CD8-positive, alpha-beta T cell (primary cell): ENCODE measurements at regions of chr13 and their contacts with region 1.

Region 1: GRCh38 chr13:95403828-95404522 is 102.7 kb upstream of the ABCC4 start:
- DNase-seq: peak; percentile 52 to 86 (median 76)
- ATAC-seq: peak; percentile 94
- H3K4me3 ChIP-seq: peak overlapping the region; percentile 58 to 69
- H3K4me3 Mint-ChIP-seq: peak overlapping the region; percentile 91
- H3K27ac ChIP-seq: no peak overlapping the region
- H3K27ac Mint-ChIP-seq: no peak overlapping the region
- H3K4me1 ChIP-seq: peaks cover 8% of the 10 kb centered on the region
- H3K4me1 Mint-ChIP-seq: peaks cover 8% of the 10 kb centered on the region
- H3K27me3 ChIP-seq: no peaks in the 10 kb centered on the region
- H3K27me3 Mint-ChIP-seq: peaks cover 3% of the 10 kb centered on the region
- CTCF ChIP-seq: peak; percentile 93

Region 2: DNA sequence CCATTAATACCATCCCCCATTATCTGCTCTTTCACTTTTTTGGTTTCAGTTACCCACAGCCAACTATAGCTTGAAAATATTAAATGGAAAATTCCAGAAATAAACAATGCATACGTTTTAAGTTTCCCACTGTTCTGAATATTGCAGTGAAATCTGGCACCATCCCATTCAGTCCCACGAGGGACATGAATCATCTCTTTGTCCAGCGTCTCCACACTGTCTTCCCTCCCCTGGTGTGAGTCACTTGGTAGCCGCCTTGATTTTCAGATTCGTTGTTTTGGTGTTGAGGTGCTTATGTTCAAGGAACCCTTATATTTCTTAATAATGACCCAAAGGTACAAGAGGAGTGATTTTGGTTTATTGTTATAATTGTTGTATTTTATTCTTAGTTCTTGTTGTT is 1170.6 kb before region 1 on chr13:
- CTCF ChIA-PET with region 1: no interaction called
- POLR2A ChIA-PET with region 1: no interaction called
- intact Hi-C with region 1: no loop called
- DNase-seq: no peak
- ATAC-seq: no peak
- H3K4me3 ChIP-seq: no peak overlapping the region
- H3K4me3 Mint-ChIP-seq: no peak overlapping the region
- H3K27ac ChIP-seq: no peak overlapping the region
- H3K27ac Mint-ChIP-seq: no peak overlapping the region
- H3K4me1 ChIP-seq: peaks cover 18% of the 10 kb centered on the region
- H3K4me1 Mint-ChIP-seq: peaks cover 24% of the 10 kb centered on the region
- H3K27me3 ChIP-seq: no peaks in the 10 kb centered on the region
- H3K27me3 Mint-ChIP-seq: no peaks in the 10 kb centered on the region
- CTCF ChIP-seq: no peak

Region 3: DNA sequence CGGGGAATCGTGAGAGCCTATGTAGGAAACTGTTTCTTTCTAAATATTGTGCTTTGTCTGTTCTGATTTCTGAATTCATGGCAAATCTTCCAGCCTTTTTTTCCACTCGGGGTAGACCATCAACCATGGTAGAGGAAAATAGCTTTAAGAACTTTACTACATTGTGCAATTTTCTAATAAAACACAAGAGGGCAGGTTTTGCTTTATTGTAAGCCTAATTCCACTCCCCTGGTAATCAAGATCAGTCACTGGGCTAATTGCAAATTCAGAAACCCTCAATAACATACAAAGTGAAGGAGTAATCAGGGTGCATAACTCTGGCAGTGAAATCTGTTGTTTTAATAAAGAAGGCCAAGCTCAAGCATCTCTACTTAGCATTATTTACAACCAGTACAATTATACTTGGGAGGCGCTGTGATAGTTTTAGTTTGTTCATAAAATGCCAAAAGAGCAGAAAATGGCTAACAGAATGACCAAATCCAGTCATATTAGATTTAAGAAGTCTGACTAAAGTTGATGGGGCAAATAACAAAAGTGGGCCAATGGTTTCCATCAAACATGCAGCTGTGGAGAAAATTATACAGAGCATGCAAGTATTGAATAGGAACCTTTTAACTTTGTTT is 968.3 kb before region 1 on chr13:
- CTCF ChIA-PET with region 1: interaction called, 4 read pairs
- POLR2A ChIA-PET with region 1: no interaction called
- intact Hi-C with region 1: loop called in 1 of 2 experiments (anchors 5 kb)
- DNase-seq: peak in 2 of 9 experiments; percentile 54 to 64
- ATAC-seq: peak; percentile 81
- H3K4me3 ChIP-seq: no peak overlapping the region
- H3K4me3 Mint-ChIP-seq: no peak overlapping the region
- H3K27ac ChIP-seq: no peak overlapping the region
- H3K27ac Mint-ChIP-seq: no peak overlapping the region
- H3K4me1 ChIP-seq: no peaks in the 10 kb centered on the region
- H3K4me1 Mint-ChIP-seq: peaks cover 4% of the 10 kb centered on the region
- H3K27me3 ChIP-seq: no peaks in the 10 kb centered on the region
- H3K27me3 Mint-ChIP-seq: no peaks in the 10 kb centered on the region
- CTCF ChIP-seq: peak; percentile 82

Region 4: GRCh38 chr13:94674609-94675348 is 729.2 kb before region 1 on chr13:
- CTCF ChIA-PET with region 1: interaction called, 15 read pairs
- POLR2A ChIA-PET with region 1: no interaction called
- intact Hi-C with region 1: loop called in 1 of 2 experiments (anchors 1 kb)
- DNase-seq: peak in 8 of 9 experiments; percentile 17 to 60 (median 50)
- ATAC-seq: peak; percentile 52
- H3K4me3 ChIP-seq: no peak overlapping the region
- H3K4me3 Mint-ChIP-seq: no peak overlapping the region
- H3K27ac ChIP-seq: no peak overlapping the region
- H3K27ac Mint-ChIP-seq: no peak overlapping the region
- H3K4me1 ChIP-seq: no peaks in the 10 kb centered on the region
- H3K4me1 Mint-ChIP-seq: no peaks in the 10 kb centered on the region
- H3K27me3 ChIP-seq: no peaks in the 10 kb centered on the region
- H3K27me3 Mint-ChIP-seq: peaks cover 22% of the 10 kb centered on the region
- CTCF ChIP-seq: peak; percentile 87

Region 5: GRCh38 chr13:94860981-94861407 is 543.0 kb before region 1 on chr13:
- CTCF ChIA-PET with region 1: no interaction called
- POLR2A ChIA-PET with region 1: no interaction called
- intact Hi-C with region 1: no loop called
- DNase-seq: peak in 1 of 9 experiments; percentile 40
- ATAC-seq: no peak
- H3K4me3 ChIP-seq: peak overlapping the region; percentile 37 to 42
- H3K4me3 Mint-ChIP-seq: peak overlapping the region; percentile 86
- H3K27ac ChIP-seq: no peak overlapping the region
- H3K27ac Mint-ChIP-seq: peak overlapping the region; percentile 14
- H3K4me1 ChIP-seq: peaks cover 4% of the 10 kb centered on the region
- H3K4me1 Mint-ChIP-seq: peaks cover 12% of the 10 kb centered on the region
- H3K27me3 ChIP-seq: no peaks in the 10 kb centered on the region
- H3K27me3 Mint-ChIP-seq: peaks cover 5% of the 10 kb centered on the region
- CTCF ChIP-seq: no peak

Region 6: GRCh38 chr13:95191821-95192563 is 212.0 kb before region 1 on chr13:
- CTCF ChIA-PET with region 1: interaction called, 205 read pairs
- POLR2A ChIA-PET with region 1: interaction called, 13 read pairs
- intact Hi-C with region 1: loop called (anchors 1 kb)
- DNase-seq: peak; percentile 29 to 74 (median 57)
- ATAC-seq: peak; percentile 65
- H3K4me3 ChIP-seq: no peak overlapping the region
- H3K4me3 Mint-ChIP-seq: no peak overlapping the region
- H3K27ac ChIP-seq: no peak overlapping the region
- H3K27ac Mint-ChIP-seq: no peak overlapping the region
- H3K4me1 ChIP-seq: no peaks in the 10 kb centered on the region
- H3K4me1 Mint-ChIP-seq: peaks cover 8% of the 10 kb centered on the region
- H3K27me3 ChIP-seq: no peaks in the 10 kb centered on the region
- H3K27me3 Mint-ChIP-seq: no peaks in the 10 kb centered on the region
- CTCF ChIP-seq: peak; percentile 54

Region 7: DNA sequence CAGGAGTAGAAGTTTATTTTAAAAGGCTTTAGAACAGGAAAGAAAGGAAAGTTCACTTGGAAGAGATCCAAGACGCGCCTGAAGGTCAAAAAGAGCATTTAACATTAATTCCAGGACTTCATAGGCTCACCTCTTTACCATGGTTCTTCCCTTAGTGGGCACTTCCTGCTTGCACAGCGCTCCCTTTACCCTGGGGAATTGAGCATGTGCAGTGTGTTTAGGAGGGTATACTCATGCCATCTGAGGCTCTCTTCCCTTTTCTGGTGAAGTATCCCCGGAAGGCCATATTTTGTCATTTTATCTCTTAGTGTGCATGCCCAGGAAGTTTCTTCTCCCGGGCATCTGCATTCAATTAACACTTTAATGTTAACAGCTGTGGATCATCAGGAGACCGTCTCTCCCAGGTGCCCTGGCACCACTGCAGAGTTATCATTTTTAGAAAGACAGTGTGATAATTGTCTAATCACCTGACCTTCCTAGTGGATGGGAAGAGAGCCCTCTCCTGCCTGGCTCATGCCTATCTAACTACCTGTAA is 36.6 kb before region 1 on chr13:
- CTCF ChIA-PET with region 1: interaction called, 10 read pairs
- POLR2A ChIA-PET with region 1: no interaction called
- intact Hi-C with region 1: no loop called
- DNase-seq: no peak
- ATAC-seq: no peak
- H3K4me3 ChIP-seq: no peak overlapping the region
- H3K4me3 Mint-ChIP-seq: no peak overlapping the region
- H3K27ac ChIP-seq: no peak overlapping the region
- H3K27ac Mint-ChIP-seq: no peak overlapping the region
- H3K4me1 ChIP-seq: no peaks in the 10 kb centered on the region
- H3K4me1 Mint-ChIP-seq: no peaks in the 10 kb centered on the region
- H3K27me3 ChIP-seq: no peaks in the 10 kb centered on the region
- H3K27me3 Mint-ChIP-seq: peaks cover 4% of the 10 kb centered on the region
- CTCF ChIP-seq: no peak

Region 8: GRCh38 chr13:95388420-95389079 is 15.4 kb before region 1 on chr13:
- CTCF ChIA-PET with region 1: interaction called, 47 read pairs
- POLR2A ChIA-PET with region 1: no interaction called
- intact Hi-C with region 1: no loop called
- DNase-seq: no peak
- ATAC-seq: no peak
- H3K4me3 ChIP-seq: no peak overlapping the region
- H3K4me3 Mint-ChIP-seq: no peak overlapping the region
- H3K27ac ChIP-seq: no peak overlapping the region
- H3K27ac Mint-ChIP-seq: no peak overlapping the region
- H3K4me1 ChIP-seq: no peaks in the 10 kb centered on the region
- H3K4me1 Mint-ChIP-seq: no peaks in the 10 kb centered on the region
- H3K27me3 ChIP-seq: no peaks in the 10 kb centered on the region
- H3K27me3 Mint-ChIP-seq: peaks cover 17% of the 10 kb centered on the region
- CTCF ChIP-seq: no peak

Region 9: DNA sequence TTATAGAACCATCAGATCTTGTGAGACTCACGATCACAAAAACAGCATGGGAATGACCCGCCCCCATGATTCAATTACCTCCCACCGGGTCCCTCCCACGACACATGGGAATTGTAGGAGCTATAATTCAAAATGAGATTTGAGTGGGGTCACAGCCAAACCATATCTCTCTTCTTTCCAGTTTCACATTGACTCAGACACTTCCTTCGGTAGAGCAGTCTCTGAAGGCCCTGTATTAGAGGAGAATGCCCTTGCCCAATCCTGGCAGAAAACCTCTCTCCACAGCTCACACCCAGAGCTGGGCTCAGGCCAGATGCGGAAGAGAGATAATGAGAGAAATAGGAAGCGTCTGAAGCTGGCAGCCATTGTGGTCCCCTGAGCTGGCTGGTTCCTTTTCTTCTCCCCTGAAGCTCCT is 76.2 kb after region 1 on chr13:
- CTCF ChIA-PET with region 1: interaction called, 3 read pairs
- POLR2A ChIA-PET with region 1: no interaction called
- intact Hi-C with region 1: loop called in 1 of 2 experiments (anchors 1 kb)
- DNase-seq: peak in 1 of 9 experiments; percentile 23
- ATAC-seq: no peak
- H3K4me3 ChIP-seq: no peak overlapping the region
- H3K4me3 Mint-ChIP-seq: no peak overlapping the region
- H3K27ac ChIP-seq: no peak overlapping the region
- H3K27ac Mint-ChIP-seq: no peak overlapping the region
- H3K4me1 ChIP-seq: no peaks in the 10 kb centered on the region
- H3K4me1 Mint-ChIP-seq: peaks cover 4% of the 10 kb centered on the region
- H3K27me3 ChIP-seq: no peaks in the 10 kb centered on the region
- H3K27me3 Mint-ChIP-seq: peaks cover 5% of the 10 kb centered on the region
- CTCF ChIP-seq: no peak